Dorsolateral prefrontal cortex (tissue), 120 donors: ENCODE measurements at regions of chr9 and their contacts with region 1.

Region 1: DNA sequence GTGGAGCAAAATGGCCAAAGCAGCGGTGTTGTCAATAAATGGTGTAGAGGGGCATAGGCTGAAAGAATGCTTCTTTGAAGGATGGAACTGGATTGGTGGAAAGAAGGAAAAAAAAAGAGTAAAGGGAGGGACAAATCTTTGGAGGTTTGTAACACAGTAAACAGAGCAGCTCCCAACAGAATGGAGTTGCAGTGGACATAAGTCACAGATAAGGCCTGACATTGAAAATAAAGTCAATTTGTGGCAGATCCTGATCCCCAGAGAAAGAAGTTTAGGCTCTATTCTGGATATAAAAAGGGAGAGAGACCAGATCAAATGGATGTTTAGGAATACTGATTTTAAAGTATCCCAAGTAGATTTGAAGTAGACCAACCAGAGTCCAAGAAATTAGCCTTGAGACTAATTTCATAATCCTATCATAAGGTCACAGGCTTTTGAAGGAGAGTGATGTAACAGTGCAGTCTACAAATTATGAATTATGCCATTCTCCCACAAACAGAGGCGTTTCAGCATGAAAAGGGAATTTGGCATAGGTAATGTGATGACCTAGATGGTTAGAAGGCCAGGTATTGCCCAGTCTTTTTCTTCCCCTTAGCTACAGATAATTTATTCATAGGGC is 8.9 kb downstream of the ALDH1A1 start:
- DNase-seq: no peak
- H3K4me3 ChIP-seq: no peak overlapping the region
- H3K27ac ChIP-seq: no peak overlapping the region
- H3K27me3 ChIP-seq: peaks cover 0 to 5% (median 0%) of the 10 kb centered on the region in 45 donors
- CTCF ChIP-seq: no peak

Region 2: GRCh38 chr9:72807765-72808445 is 136.0 kb before region 1 on chr9:
- intact Hi-C with region 1: no loop called
- DNase-seq: no peak
- H3K4me3 ChIP-seq: no peak overlapping the region
- H3K27ac ChIP-seq: no peak overlapping the region
- H3K27me3 ChIP-seq: no peaks in the 10 kb centered on the region
- CTCF ChIP-seq: no peak

Region 3: DNA sequence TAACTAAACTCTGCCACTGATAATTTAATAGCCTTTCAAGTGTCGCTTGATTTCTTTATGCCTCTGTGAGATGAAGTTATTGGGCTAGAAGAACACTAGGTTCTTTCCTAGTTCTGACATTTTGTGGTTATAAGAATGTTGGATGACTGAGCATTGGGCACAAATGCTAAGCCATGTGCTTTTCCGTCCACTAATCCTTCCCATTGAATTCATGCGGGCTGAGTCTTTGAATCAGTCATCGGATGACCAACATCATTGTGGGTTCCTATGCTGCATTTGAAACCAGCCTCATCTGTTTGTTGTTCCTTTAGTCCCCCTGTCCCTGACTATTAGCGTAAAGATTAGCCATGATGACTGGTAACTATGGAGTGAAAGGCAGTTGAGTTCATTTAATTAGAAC is 49.6 kb before region 1 on chr9:
- intact Hi-C with region 1: loop called in 1 of 2 experiments (anchors 5 kb)
- DNase-seq: no peak
- H3K4me3 ChIP-seq: no peak overlapping the region
- H3K27ac ChIP-seq: no peak overlapping the region
- H3K27me3 ChIP-seq: no peaks in the 10 kb centered on the region
- CTCF ChIP-seq: no peak

Region 4: GRCh38 chr9:72905514-72906480 is 38.2 kb before region 1 on chr9:
- intact Hi-C with region 1: no loop called
- DNase-seq: no peak
- H3K4me3 ChIP-seq: no peak overlapping the region
- H3K27ac ChIP-seq: no peak overlapping the region
- H3K27me3 ChIP-seq: no peaks in the 10 kb centered on the region
- CTCF ChIP-seq: no peak